Activated B cell treated with CpG ODN at 0.5 μM for 24 hours (primary cell): ENCODE measurements at regions of chr2 and their contacts with region 1.

Region 1: DNA sequence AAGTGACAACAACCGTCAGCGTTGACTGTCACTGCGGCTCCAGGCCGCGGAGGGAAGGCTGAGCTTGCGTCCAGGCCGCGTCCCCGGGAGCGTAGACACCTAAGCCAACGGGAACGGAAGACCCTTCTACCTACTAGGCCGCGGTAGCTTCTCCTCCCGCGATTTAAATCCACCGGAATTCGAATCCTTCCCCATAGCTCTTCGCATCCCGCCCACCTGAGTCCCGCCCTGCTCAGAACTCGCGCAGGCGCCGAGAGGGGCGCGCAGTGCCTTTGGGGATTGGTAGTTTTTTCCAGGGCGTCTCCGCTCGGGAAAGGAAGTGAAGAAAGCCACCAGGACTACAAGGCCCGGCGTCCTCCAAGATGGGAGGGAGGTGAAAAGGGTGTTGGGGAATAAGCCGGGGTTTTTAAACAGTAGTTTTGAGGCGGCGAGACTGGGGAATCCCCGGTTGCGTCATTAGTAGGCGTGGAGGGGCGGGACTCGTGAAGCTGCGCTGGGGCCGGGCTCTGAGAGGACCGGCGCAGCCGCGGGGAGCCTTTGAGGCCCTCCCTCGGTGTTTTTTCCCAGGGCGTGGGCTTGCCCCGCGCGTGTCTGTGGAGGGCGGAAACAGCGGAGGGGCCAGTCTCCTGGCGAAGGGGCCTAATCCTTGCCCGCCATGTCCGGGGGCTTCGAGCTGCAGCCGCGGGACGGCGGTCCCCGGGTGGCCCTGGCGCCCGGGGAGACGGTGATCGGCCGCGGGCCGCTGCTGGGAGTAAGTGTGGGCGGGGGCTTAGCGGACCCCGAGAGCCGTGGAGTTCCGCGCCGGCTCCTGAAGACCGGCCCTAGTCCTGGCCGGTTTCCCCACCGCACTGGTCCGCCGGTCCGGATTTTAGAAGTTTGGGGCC is at the starts of genes APLF and FBXO48:
- DNase-seq: peak; percentile 96
- ATAC-seq: peak; percentile 94
- H3K4me3 Mint-ChIP-seq: peak within 1 kb of the TSS; percentile 98
- H3K27ac Mint-ChIP-seq: peak within 1 kb of the TSS; percentile 93
- H3K4me1 Mint-ChIP-seq: peaks cover 29% of the 10 kb centered on the region
- H3K27me3 Mint-ChIP-seq: no peaks in the 10 kb centered on the region
- CTCF ChIP-seq: no peak
- total RNA-seq, gene APLF: 6.4 and 6.8 TPM in 2 replicates
- total RNA-seq, gene FBXO48: 1.8 and 2.6 TPM in 2 replicates

Region 2: DNA sequence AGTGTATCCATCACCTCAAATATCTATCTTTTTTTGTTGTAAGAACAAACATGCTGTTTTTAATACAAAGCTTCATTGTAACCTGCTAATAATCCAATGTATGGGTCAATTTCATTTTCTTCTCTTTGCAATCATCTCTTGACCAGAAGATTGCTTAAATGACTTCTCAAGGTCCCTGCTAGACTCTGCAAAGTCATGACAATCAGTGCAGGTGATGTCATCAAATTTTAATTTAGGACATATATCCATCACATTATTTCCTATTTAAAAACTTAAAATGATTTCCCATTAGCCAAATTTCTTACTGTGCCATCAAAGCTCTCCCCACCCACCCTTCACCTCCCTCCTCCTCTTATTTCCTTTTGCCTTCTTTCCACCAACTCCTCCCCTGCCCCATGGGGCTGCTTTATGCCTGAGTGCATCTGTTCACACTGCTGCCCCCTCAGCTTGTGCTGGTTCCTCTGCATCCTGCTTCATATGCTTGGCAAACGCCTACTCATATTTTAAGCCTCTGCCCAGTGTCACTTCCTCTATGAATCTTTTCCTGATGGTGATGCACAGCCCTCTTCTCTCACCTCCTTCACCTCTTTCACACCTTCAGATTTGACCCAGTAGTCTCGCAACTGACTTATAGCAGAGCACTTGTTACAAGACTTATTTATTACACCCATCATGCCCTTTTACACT is 82.0 kb before region 1 on chr2:
- CTCF ChIA-PET with region 1: no interaction called
- POLR2A ChIA-PET with region 1: no interaction called
- intact Hi-C with region 1: no loop called
- DNase-seq: no peak
- ATAC-seq: peak; percentile 69
- H3K4me3 Mint-ChIP-seq: peak overlapping the region; percentile 29
- H3K27ac Mint-ChIP-seq: peak overlapping the region; percentile 91
- H3K4me1 Mint-ChIP-seq: peaks cover 97% of the 10 kb centered on the region
- H3K27me3 Mint-ChIP-seq: no peaks in the 10 kb centered on the region
- CTCF ChIP-seq: no peak

Region 3: DNA sequence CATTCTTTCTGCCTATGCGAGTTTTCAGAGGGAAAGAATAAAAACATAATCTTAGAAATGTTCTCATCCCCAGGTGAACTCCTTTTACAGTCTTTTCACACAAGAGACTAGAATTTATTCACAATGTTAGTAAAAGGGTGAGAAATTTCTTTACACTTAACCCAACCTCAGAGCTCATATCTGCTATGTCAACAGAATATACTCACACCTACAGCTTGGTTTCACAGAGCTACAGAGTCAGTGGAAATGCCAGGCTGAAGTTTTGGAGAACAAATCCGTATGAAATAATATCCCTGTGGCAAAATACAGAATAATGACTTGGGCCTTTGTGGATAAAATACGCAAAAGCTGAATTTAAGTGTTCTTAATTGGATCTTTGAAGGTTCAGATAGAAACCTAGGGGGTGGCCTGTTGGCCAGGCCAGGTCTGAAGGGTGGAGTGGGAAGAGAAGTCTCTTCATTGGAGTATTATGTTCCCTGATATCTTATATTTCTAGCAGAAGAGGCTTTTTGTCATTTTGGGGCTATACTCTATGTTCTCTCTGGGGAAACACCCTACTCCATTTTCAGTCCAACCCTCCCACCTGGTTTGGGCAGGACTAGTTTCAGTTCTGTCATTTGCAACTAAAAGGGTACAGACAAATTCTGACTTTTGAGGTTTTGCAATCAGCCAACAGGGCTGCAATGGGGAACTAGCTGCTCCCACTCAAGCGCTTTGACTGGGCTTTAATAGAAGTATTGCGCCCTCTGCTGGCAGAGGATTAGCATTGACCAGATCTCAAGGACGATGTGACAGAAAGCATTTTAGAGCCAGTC is 25.9 kb before region 1 on chr2:
- CTCF ChIA-PET with region 1: interaction called, 5 read pairs
- POLR2A ChIA-PET with region 1: interaction called, 3 read pairs
- intact Hi-C with region 1: loop called (anchors 1 kb)
- DNase-seq: peak; percentile 57
- ATAC-seq: peak; percentile 98
- H3K4me3 Mint-ChIP-seq: peak overlapping the region; percentile 65
- H3K27ac Mint-ChIP-seq: peak overlapping the region; percentile 95
- H3K4me1 Mint-ChIP-seq: peaks cover 51% of the 10 kb centered on the region
- H3K27me3 Mint-ChIP-seq: no peaks in the 10 kb centered on the region
- CTCF ChIP-seq: no peak

Region 4: GRCh38 chr2:68709421-68709911 is 242.1 kb after region 1 on chr2:
- CTCF ChIA-PET with region 1: interaction called, 42 read pairs
- POLR2A ChIA-PET with region 1: interaction called, 4 read pairs
- intact Hi-C with region 1: no loop called
- DNase-seq: no peak
- ATAC-seq: peak; percentile 71
- H3K4me3 Mint-ChIP-seq: no peak overlapping the region
- H3K27ac Mint-ChIP-seq: peak overlapping the region; percentile 6
- H3K4me1 Mint-ChIP-seq: peaks cover 39% of the 10 kb centered on the region
- H3K27me3 Mint-ChIP-seq: no peaks in the 10 kb centered on the region
- CTCF ChIP-seq: peak; percentile 51

Region 5: GRCh38 chr2:68828887-68829708 is 361.8 kb after region 1 on chr2:
- CTCF ChIA-PET with region 1: interaction called, 4 read pairs
- POLR2A ChIA-PET with region 1: no interaction called
- intact Hi-C with region 1: loop called (anchors 1 kb)
- DNase-seq: no peak
- ATAC-seq: peak; percentile 29
- H3K4me3 Mint-ChIP-seq: peak overlapping the region; percentile 8
- H3K27ac Mint-ChIP-seq: peak overlapping the region; percentile 76
- H3K4me1 Mint-ChIP-seq: peaks cover 78% of the 10 kb centered on the region
- H3K27me3 Mint-ChIP-seq: no peaks in the 10 kb centered on the region
- CTCF ChIP-seq: no peak

Region 6: GRCh38 chr2:69306822-69307578 is 839.7 kb after region 1 on chr2:
- CTCF ChIA-PET with region 1: interaction called, 5 read pairs
- POLR2A ChIA-PET with region 1: no interaction called
- intact Hi-C with region 1: loop called (anchors 1 kb)
- DNase-seq: peak; percentile 70
- ATAC-seq: peak; percentile 92
- H3K4me3 Mint-ChIP-seq: peak overlapping the region; percentile 81
- H3K27ac Mint-ChIP-seq: no peak overlapping the region
- H3K4me1 Mint-ChIP-seq: peaks cover 33% of the 10 kb centered on the region
- H3K27me3 Mint-ChIP-seq: peaks cover 26% of the 10 kb centered on the region
- CTCF ChIP-seq: no peak

Region 7: GRCh38 chr2:69724540-69725159 is 1257.3 kb after region 1 on chr2:
- CTCF ChIA-PET with region 1: no interaction called
- POLR2A ChIA-PET with region 1: no interaction called
- intact Hi-C with region 1: loop called (anchors 5 kb)
- DNase-seq: peak; percentile 74
- ATAC-seq: peak; percentile 75
- H3K4me3 Mint-ChIP-seq: peak overlapping the region; percentile 52
- H3K27ac Mint-ChIP-seq: no peak overlapping the region
- H3K4me1 Mint-ChIP-seq: peaks cover 6% of the 10 kb centered on the region
- H3K27me3 Mint-ChIP-seq: peaks cover 6% of the 10 kb centered on the region
- CTCF ChIP-seq: peak; percentile 84